Adrenal gland (tissue), 19 donors: ENCODE measurements at regions of chr21 and their contacts with region 1.

Region 1: DNA sequence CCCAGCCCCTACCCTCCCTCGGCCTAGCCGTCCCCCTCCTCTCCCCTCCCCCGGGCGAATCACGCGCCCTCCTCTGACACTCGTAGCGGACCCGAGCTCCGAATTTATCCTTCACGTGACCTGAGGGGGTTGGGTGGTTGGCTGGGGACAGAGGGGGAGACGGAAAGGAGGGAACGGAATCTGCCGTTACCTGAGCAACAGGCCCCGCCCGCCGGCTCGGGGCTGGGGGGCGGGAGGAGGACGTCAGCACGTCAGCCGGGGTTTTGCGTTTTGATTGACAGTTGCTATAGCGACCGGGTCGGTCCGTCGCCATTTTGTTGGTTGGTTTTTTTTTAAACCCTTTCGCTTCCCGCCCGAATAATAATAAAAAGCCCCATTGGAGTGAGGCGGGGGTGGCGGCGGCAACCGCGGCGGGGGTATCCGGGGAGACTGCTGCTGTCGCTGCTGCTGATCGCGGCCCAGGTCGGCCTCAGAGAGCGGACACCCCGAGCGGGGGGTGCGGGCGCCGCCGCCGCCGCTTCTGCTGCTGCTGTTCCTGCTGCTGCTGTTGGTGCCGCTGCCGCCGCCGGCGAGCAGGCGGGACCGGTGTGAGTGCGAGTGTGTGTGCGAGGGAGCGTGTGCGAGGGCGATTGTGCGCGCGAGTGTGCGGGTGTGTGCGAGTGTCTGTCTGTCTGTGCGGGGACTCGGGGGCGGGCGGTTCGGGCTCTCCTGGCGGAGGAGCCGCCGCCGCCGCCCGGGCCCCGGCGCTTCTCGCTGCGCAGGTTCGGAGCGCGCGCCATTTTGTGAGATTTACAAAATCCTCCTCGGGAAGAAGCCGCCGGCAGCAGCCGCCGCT is at the start of gene DYRK1A:
- DNase-seq: peak; percentile 99 to 100 (median 99)
- H3K4me3 ChIP-seq: peak within 1 kb of the TSS; percentile 39 to 98 (median 80)
- H3K27ac ChIP-seq: peak within 1 kb of the TSS; percentile 98 to 100 (median 100)
- H3K4me1 ChIP-seq: peaks cover 35 to 42% of the 10 kb centered on the region in 2 donors
- H3K27me3 ChIP-seq: no peaks in the 10 kb centered on the region
- CTCF ChIP-seq: no peak
- POLR2A ChIP-seq: peak; percentile 73 to 82
- total RNA-seq, gene DYRK1A: 53.0 to 92.3 (median 68.4) TPM

Region 2: DNA sequence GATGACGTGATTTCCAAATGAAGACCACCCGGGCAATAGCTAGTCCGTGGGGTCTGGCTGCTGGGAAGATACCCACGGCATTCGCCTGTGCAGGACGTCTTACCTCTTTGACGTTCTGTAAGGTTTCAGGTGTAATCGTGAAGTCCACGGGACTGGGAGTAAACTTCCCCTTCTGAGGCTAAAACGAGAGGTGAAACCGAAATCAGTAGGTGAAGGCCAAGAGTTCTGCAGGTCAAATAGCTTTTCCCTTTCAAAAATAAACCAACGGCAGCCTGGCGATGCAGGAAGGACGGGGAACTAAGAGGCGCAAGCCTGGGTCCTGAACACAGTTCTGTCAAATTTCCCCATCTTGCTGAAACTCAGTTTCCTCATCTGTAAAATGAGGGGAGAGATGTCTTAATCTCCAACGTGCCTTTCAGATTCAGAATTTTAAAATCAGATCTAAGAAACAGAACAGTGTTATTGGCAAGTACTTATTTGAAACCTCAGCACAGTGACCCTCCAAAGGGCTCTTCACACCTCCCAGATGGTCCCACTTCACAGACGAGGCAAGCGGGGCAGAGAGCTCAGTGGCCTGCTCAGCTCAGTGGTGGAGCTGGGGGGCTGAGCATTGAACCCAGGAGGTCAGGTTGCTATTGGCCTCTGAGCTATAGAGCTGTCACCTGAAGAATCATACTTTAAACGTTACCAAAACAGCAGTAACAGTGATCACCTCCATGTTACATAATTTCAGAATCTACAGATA is 134.3 kb before region 1 on chr21:
- intact Hi-C with region 1: no loop called
- DNase-seq: peak in 1 of 7 donors; percentile 25
- H3K4me3 ChIP-seq: no peak overlapping the region
- H3K27ac ChIP-seq: no peak overlapping the region
- H3K4me1 ChIP-seq: no peaks in the 10 kb centered on the region
- H3K27me3 ChIP-seq: no peaks in the 10 kb centered on the region
- CTCF ChIP-seq: no peak
- POLR2A ChIP-seq: no peak

Region 3: DNA sequence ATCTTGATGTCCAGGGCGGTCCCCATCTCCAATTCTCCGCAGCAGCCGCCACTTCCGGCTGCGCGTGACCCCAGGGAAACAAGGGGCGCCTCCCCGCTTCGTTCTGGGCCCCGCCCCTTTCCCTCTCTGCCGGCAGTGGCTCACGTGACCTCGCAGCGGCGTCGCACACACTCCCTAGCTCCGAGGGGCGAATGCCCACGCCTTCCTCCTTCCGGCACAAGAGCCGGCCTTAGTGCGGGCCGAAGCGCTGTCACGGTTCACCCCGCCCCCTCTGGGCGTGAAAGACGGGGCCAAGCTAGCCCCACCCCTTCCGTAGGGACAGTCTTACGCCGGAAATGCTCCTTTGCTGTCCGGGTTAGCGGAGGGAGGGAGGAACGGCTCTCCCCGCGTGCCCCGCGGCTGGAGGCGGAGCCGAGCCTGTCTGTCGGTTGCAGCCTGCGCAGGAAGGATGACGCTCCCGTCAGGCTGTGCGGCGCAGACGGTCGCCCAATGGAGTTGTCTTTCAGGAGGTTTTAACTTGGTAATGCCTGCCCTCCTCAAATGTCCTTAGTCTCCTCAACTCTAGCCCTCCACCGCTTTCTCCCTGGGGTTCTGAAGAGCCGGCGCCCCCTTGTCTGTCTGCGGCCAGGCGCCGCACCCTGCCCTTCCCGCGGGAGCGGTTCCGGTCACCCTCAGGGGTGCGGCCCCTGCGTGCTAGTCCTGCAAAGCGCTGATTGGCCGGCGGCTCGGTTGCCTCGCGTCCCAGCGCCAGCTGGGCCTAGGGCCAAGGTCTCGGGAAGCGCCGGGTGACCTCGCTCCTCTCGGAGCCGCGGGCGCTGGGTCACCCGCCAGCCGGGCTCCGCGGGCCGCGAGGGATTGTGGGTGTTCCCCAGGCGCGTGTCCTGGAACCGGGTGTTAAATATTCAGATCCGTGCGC is 99.2 kb before region 1 on chr21 and contains the start of gene VPS26C:
- intact Hi-C with region 1: loop called in 1 of 2 experiments (anchors 10 kb)
- DNase-seq: peak; percentile 98 to 99 (median 98)
- H3K4me3 ChIP-seq: peak within 1 kb of the TSS; percentile 13 to 83 (median 72)
- H3K27ac ChIP-seq: peak within 1 kb of the TSS; percentile 94 to 100 (median 98)
- H3K4me1 ChIP-seq: peaks cover 9 to 23% of the 10 kb centered on the region in 2 donors
- H3K27me3 ChIP-seq: no peaks in the 10 kb centered on the region
- CTCF ChIP-seq: no peak
- POLR2A ChIP-seq: peak; percentile 86 to 95
- total RNA-seq, gene VPS26C: 52.5 to 94.8 (median 66.1) TPM

Region 4: DNA sequence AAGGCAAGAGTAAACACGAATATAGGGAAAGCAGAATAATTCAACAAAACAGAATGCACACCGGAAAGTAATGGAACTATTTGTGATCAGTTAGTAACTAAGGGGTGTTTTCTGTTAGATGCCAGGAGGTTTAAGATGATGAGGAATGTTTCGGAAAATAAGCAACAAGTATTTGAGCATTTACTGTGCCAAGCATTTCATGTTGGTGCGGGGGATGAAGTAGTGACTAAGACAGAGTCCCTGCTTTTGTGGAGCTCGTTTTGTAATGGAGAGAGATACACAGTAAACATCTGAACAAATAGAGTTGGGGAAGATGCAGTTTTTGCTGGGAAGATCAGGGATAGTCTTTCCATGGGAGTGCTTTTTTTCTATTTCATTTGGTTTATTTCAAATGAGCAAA is 78.5 kb after region 1 on chr21:
- intact Hi-C with region 1: loop called in 1 of 2 experiments (anchors 10 kb)
- DNase-seq: no peak
- H3K4me3 ChIP-seq: no peak overlapping the region
- H3K27ac ChIP-seq: peak overlapping the region in 2 of 5 donors; percentile 1 to 2
- H3K4me1 ChIP-seq: peaks cover 14 to 61% of the 10 kb centered on the region in 2 donors
- H3K27me3 ChIP-seq: no peaks in the 10 kb centered on the region
- CTCF ChIP-seq: no peak
- POLR2A ChIP-seq: no peak